ENCODE measurements at regions of chr2 and their contacts with region 1.

Region 1: GRCh38 chr2:191150600-191151330 is at the start of gene STAT4:
- DNase-seq: peak; percentile 57
- H3K4me3 Mint-ChIP-seq: peak within 1 kb of the TSS; percentile 69
- H3K27ac Mint-ChIP-seq: no peak within 1 kb of the TSS
- H3K4me1 Mint-ChIP-seq: no peaks in the 10 kb centered on the region
- H3K27me3 Mint-ChIP-seq: peaks cover 10% of the 10 kb centered on the region
- CTCF ChIP-seq: no peak
- total RNA-seq, gene STAT4: 0.83 and 1.4 TPM in 2 replicates

Region 2: DNA sequence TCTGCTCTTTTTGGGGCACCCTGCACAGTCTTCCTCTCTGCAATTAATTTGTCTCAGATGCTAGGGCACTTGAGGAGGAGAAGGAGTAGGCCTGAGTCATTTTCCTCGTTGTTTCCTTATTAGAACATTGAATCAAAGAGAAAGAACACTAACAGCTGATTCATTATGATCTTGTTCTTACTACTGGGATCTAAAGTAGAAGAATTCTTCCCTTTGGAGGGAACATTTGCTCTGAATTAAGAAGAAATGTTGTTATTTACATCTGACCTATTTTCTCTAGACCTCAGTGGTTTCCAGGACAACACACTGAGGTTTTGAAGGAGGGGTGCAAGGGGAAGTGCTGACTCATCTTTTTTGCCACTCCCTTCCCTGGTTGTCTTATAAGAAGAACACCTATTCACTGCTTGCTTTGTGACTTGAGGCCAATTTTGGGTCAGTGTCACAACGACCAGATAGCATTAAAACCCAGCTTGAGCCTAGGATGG is 112.5 kb before region 1 on chr2:
- CTCF ChIA-PET with region 1: interaction called, 17 read pairs
- POLR2A ChIA-PET with region 1: no interaction called
- intact Hi-C with region 1: no loop called
- DNase-seq: peak; percentile 35
- H3K4me3 Mint-ChIP-seq: no peak overlapping the region
- H3K27ac Mint-ChIP-seq: peak overlapping the region; percentile 74
- H3K4me1 Mint-ChIP-seq: peaks cover 19% of the 10 kb centered on the region
- H3K27me3 Mint-ChIP-seq: no peaks in the 10 kb centered on the region
- CTCF ChIP-seq: no peak

Region 3: DNA sequence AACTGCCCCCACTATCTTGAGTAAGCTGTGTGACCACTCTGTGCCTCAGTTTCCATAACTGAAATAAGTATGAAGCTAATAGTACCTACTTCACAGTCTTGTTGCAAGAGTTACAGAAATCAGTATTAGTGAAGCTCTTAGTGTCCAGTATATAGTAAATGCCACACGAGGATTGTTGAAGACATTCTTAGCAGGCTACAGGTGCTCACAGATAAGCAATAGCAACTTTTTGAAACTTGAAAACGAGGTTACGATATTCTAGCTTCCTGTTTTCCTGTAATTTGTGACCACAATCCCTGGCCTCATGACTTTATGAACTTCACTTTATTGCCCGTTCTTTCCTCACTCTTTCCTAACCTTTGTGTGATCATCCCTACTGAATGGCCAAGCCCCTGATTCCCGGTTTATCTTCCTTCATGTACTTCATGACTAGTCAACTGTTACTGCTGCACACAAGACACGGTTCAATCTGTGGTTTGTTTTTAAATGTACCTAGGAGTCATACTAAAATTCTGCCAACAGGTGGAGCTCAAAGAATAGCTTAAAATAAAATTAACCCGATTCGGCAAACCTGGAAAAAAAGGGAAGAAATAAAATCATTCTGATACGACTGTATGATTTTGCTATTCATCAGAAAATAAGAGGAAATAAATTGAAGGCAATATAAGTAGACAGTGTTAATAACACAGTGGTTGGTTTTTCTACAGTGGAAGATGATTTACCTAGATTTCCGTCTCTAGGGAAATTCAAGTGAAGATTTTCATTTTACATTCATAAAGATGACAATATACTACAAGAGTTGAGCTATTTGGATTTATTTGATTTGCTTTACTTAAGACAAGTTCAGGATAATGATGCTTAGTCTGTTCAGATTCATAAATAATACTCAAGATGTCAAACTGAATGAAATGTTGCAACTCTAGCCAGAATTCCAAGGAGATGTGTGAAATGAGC is 98.7 kb before region 1 on chr2:
- CTCF ChIA-PET with region 1: interaction called, 604 read pairs
- POLR2A ChIA-PET with region 1: interaction called, 19 read pairs
- intact Hi-C with region 1: loop called (anchors 1 kb)
- DNase-seq: peak; percentile 64
- H3K4me3 Mint-ChIP-seq: no peak overlapping the region
- H3K27ac Mint-ChIP-seq: no peak overlapping the region
- H3K4me1 Mint-ChIP-seq: peaks cover 10% of the 10 kb centered on the region
- H3K27me3 Mint-ChIP-seq: no peaks in the 10 kb centered on the region
- CTCF ChIP-seq: peak; percentile 59

Region 4: GRCh38 chr2:191078165-191078867 is 72.4 kb before region 1 on chr2:
- CTCF ChIA-PET with region 1: interaction called, 12 read pairs
- POLR2A ChIA-PET with region 1: no interaction called
- intact Hi-C with region 1: no loop called
- DNase-seq: no peak
- H3K4me3 Mint-ChIP-seq: no peak overlapping the region
- H3K27ac Mint-ChIP-seq: no peak overlapping the region
- H3K4me1 Mint-ChIP-seq: no peaks in the 10 kb centered on the region
- H3K27me3 Mint-ChIP-seq: peaks cover 10% of the 10 kb centered on the region
- CTCF ChIP-seq: no peak

Region 5: GRCh38 chr2:191165176-191165643 is 14.4 kb after region 1 on chr2:
- CTCF ChIA-PET with region 1: interaction called, 33 read pairs
- POLR2A ChIA-PET with region 1: no interaction called
- intact Hi-C with region 1: no loop called
- DNase-seq: peak; percentile 71
- H3K4me3 Mint-ChIP-seq: no peak overlapping the region
- H3K27ac Mint-ChIP-seq: no peak overlapping the region
- H3K4me1 Mint-ChIP-seq: peaks cover 36% of the 10 kb centered on the region
- H3K27me3 Mint-ChIP-seq: no peaks in the 10 kb centered on the region
- CTCF ChIP-seq: peak; percentile 51

Region 6: GRCh38 chr2:191280834-191281756 is 130.3 kb after region 1 on chr2:
- CTCF ChIA-PET with region 1: no interaction called
- POLR2A ChIA-PET with region 1: no interaction called
- intact Hi-C with region 1: no loop called
- DNase-seq: no peak
- H3K4me3 Mint-ChIP-seq: no peak overlapping the region
- H3K27ac Mint-ChIP-seq: no peak overlapping the region
- H3K4me1 Mint-ChIP-seq: no peaks in the 10 kb centered on the region
- H3K27me3 Mint-ChIP-seq: no peaks in the 10 kb centered on the region
- CTCF ChIP-seq: no peak

Region 7: GRCh38 chr2:191515551-191515950 is 364.8 kb after region 1 on chr2:
- CTCF ChIA-PET with region 1: interaction called, 17 read pairs
- POLR2A ChIA-PET with region 1: no interaction called
- intact Hi-C with region 1: no loop called
- DNase-seq: no peak
- H3K4me3 Mint-ChIP-seq: no peak overlapping the region
- H3K27ac Mint-ChIP-seq: no peak overlapping the region
- H3K4me1 Mint-ChIP-seq: no peaks in the 10 kb centered on the region
- H3K27me3 Mint-ChIP-seq: no peaks in the 10 kb centered on the region
- CTCF ChIP-seq: no peak

Measured in MCF 10A (cell line).